ENCODE measurements at regions of chr10 and their contacts with region 1.

Region 1: DNA sequence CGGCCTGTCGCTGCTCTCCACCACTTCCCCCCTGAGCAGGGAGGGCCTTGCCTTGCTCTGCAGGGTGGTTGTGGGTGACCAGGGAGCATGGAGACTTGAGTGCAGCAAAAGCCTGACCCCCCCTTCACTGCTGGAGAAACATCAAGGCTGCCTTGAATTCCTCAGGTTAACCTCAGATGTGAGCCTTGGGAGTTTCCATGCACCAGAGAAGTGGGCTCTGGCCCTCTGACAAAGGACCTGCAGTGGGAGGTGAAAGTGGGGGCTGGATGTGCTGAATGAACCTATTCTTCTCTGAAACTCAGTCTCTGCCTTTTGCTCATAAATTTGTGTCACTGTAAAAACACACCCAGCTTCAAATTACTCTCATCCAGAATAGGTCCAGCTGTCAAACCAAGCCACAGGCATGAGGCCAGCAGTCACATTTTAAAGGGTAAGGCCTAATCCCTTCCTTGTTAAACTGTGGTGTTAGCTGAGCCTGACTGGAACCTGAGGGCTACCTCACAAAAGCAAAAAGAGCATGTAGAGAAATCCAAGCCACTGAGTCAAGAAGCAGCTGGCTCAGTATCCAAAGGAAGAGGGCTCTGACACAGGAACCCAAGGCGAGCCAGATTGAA is 356.8 kb downstream of the CCSER2 start:
- DNase-seq: no peak
- ATAC-seq: no peak
- H3K4me3 ChIP-seq: no peak overlapping the region
- H3K27ac ChIP-seq: no peak overlapping the region
- H3K4me1 ChIP-seq: no peaks in the 10 kb centered on the region
- H3K27me3 ChIP-seq: no peaks in the 10 kb centered on the region
- CTCF ChIP-seq: no peak

Region 2: DNA sequence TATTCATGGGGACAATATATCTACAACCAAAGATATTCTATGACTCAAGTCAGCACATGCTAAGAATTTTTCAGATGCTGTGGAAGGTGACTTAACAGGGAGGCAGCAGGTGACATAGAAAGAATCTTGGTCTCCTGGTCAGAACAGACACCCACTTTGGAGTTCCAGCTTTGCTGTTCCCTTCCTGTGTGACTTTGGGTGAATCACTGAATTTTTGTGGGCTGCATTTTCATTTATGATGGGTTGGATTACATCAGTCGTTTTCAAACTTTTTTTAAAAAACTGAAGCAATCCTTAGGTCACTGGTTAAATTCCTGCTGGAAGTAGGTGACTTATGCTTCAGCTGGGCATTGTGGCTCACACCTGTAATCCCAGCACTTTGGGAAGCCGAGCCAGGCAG is 415.4 kb before region 1 on chr10:
- intact Hi-C with region 1: loop called in 1 of 3 experiments (anchors 5 kb)
- DNase-seq: no peak
- ATAC-seq: no peak
- H3K4me3 ChIP-seq: no peak overlapping the region
- H3K27ac ChIP-seq: no peak overlapping the region
- H3K4me1 ChIP-seq: peaks cover 0 to 6% (median 0%) of the 10 kb centered on the region in 3 donors
- H3K27me3 ChIP-seq: no peaks in the 10 kb centered on the region
- CTCF ChIP-seq: no peak

Measured in pancreas (tissue), 10 donors.